HAP-1 (cell line): ENCODE measurements at regions of chr15 and their contacts with region 1.

Region 1: GRCh38 chr15:74322181-74323076 is 45.0 kb downstream of the CYP11A1 start:
- DNase-seq: peak; percentile 82 to 91
- H3K4me3 ChIP-seq: no peak overlapping the region
- H3K4me1 ChIP-seq: peaks cover 20% of the 10 kb centered on the region
- H3K27me3 ChIP-seq: no peaks in the 10 kb centered on the region

Region 2: GRCh38 chr15:72671535-72671934 is 1650.9 kb before region 1 on chr15:
- in situ Hi-C with region 1: loop called (anchors 10 kb)
- DNase-seq: peak; percentile 90 to 100
- H3K4me3 ChIP-seq: peak overlapping the region; percentile 12
- H3K4me1 ChIP-seq: peaks cover 18% of the 10 kb centered on the region
- H3K27me3 ChIP-seq: no peaks in the 10 kb centered on the region

Region 3: DNA sequence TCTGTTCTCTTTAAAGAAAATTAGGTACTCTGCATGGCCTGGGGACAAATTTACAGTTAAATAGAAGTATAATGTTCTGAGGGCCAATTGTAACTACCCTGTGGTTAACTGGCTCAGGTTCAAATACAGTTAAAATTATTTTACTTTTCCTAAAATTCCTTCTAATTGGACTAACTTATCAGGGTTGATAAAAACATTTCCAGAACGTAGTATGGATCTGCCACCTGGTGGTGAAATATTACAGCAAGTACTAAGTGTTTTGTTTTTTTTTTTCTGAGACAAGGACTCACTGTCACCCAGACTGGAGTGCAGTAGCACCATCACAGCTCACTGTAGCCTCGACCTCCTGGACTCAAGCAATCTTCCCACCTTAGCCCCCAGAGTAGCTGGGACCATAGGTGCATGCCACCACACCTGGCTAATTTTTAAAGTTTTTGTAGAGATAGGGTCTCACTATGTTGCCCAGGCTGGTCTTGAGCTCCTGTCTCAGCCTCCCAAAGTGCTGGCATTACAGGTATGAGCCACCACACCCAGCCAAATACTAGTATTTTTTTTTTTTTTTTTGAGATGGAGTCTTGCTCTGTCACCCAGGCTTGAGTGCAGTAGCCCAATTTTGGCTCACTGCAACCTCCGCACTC is 1241.0 kb before region 1 on chr15:
- in situ Hi-C with region 1: loop called (anchors 10 kb)
- DNase-seq: peak; percentile 56 to 87
- H3K4me3 ChIP-seq: no peak overlapping the region
- H3K4me1 ChIP-seq: no peaks in the 10 kb centered on the region; the same call in 1 of the 2 replicates
- H3K27me3 ChIP-seq: no peaks in the 10 kb centered on the region

Region 4: GRCh38 chr15:73964736-73965093 is 357.7 kb before region 1 on chr15:
- in situ Hi-C with region 1: loop called (anchors 10 kb)
- DNase-seq: peak; percentile 85 to 98
- H3K4me3 ChIP-seq: no peak overlapping the region
- H3K4me1 ChIP-seq: peaks cover 28% of the 10 kb centered on the region
- H3K27me3 ChIP-seq: peaks cover 7% of the 10 kb centered on the region; the same call in 1 of the 2 replicates

Region 5: DNA sequence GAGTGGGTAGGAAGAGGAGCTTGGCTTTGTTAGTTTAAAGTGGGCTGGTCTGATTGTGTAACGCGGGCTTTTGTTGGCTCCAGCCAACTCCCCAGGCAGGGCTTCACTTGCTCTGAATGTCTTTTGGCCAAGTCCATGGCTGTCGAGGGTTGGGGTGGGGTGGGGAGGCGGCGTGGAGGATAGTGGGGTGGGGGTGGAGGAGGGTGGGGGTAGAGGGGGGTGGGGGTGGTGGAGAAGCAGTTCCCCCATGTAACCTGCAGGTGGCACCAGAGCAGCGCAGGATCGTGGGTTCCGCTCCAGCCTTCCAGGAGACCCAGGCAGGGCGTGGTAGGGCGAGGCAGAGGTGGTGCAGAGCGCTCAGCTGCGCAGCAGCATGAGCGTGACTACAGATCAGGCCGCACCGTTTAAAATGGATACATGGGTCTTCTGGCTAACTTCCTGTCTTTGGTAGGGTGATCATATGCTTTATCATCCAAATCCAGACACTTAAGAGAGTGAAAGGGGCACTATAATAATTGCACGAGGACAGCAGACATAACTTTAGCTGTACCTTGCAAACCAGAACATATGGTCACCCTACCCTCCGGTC is 268.4 kb before region 1 on chr15:
- in situ Hi-C with region 1: loop called (anchors 5 kb)
- DNase-seq: peak; percentile 91 to 97
- H3K4me3 ChIP-seq: no peak overlapping the region
- H3K4me1 ChIP-seq: peaks cover 13% of the 10 kb centered on the region
- H3K27me3 ChIP-seq: no peaks in the 10 kb centered on the region